OCI-LY7 (cell line): ENCODE measurements at regions of chr1 and their contacts with region 1.

Region 1: GRCh38 chr1:207404849-207405525 is 49.1 kb upstream of the CR2 start:
- DNase-seq: peak; percentile 78
- H3K4me3 ChIP-seq: no peak overlapping the region
- H3K27ac ChIP-seq: no peak overlapping the region
- H3K4me1 ChIP-seq: no peaks in the 10 kb centered on the region
- CTCF ChIP-seq: peak; percentile 92

Region 2: DNA sequence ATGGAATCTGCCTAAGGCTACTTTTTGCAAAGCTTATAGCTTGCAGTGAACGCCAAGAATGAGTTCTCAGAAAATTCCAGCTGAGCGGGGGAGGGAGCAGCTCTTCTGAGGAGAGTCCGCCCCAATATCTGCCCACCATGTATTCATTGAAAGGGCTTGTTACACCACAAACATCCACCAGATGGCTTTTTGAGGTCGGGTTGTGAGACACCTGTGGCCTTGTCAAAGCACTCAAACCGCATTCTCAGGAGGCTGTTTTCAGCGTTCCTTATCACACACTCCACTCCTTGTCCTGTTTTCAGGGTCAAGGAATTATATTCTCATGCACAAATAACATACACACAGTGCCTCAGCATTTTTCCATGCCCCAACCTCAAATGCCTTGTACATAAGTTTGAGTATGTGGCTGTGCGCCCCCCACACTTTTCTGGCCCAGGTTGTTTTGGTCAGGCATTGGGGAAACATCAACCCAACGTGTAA is 320.2 kb before region 1 on chr1:
- CTCF ChIA-PET with region 1: no interaction called
- POLR2A ChIA-PET with region 1: no interaction called
- intact Hi-C with region 1: loop called (anchors 1 kb)
- DNase-seq: peak; percentile 60
- H3K4me3 ChIP-seq: no peak overlapping the region
- H3K27ac ChIP-seq: no peak overlapping the region
- H3K4me1 ChIP-seq: no peaks in the 10 kb centered on the region
- CTCF ChIP-seq: peak; percentile 77

Region 3: DNA sequence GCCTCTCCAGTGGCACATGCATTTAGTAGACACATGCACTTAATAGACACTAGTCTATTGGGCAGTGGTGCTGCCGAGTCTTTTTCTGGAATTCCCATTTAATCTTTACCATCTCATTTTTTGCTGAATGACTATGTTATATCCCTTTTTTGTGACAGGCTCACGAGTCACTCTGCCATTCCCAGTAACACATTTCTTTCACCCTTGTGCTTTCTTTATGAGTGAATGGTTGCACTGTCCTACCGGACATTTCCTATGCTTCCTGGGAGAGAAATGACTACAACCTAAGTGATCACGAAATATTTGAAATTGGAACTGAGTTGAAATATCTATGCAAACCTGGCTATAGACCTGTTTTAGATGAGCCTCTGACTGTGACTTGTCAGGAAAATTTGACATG is 230.1 kb before region 1 on chr1:
- CTCF ChIA-PET with region 1: no interaction called
- POLR2A ChIA-PET with region 1: no interaction called
- intact Hi-C with region 1: no loop called
- DNase-seq: no peak
- H3K4me3 ChIP-seq: no peak overlapping the region
- H3K27ac ChIP-seq: no peak overlapping the region
- H3K4me1 ChIP-seq: no peaks in the 10 kb centered on the region
- CTCF ChIP-seq: no peak

Region 4: GRCh38 chr1:207321079-207321789 is 83.8 kb before region 1 on chr1 and contains the start of gene CD55:
- CTCF ChIA-PET with region 1: no interaction called
- POLR2A ChIA-PET with region 1: interaction called, 3 read pairs
- intact Hi-C with region 1: loop called (anchors 1 kb)
- DNase-seq: peak; percentile 96
- H3K4me3 ChIP-seq: peak within 1 kb of the TSS; percentile 87
- H3K27ac ChIP-seq: peak within 1 kb of the TSS; percentile 73
- H3K4me1 ChIP-seq: peaks cover 20% of the 10 kb centered on the region
- CTCF ChIP-seq: peak; percentile 67; the same call in 1 of the 2 replicates
- total RNA-seq, gene CD55: 18.8 and 28.1 TPM in 2 replicates

Region 5: GRCh38 chr1:208668991-208669390 is 1264.0 kb after region 1 on chr1:
- CTCF ChIA-PET with region 1: no interaction called
- POLR2A ChIA-PET with region 1: no interaction called
- intact Hi-C with region 1: no loop called
- DNase-seq: no peak
- H3K4me3 ChIP-seq: no peak overlapping the region
- H3K27ac ChIP-seq: no peak overlapping the region
- H3K4me1 ChIP-seq: no peaks in the 10 kb centered on the region
- CTCF ChIP-seq: no peak